CD4-positive, alpha-beta T cell (primary cell): ENCODE measurements at regions of chr10 and their contacts with region 1.

Region 1: DNA sequence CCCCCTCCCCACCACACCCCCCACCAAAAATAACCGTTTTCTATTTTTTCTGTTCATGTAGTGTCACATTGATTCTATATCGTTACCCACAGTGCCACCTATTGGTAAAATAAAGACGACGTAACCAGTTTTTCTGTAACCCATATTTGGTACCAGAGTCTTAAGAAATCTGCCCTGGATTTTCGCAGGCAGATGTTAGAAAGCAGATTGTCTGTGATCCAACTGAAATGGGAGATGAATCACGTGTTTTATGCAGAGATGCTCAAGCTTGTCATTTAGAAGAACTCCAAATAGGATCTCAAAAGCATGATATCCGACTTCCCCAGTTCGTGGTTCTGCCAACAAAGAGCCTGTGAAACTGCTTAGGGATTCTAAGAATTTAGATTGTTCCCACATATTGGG is 261.1 kb upstream of the CSTF2T start:
- DNase-seq: peak in 3 of 14 experiments; percentile 27 to 39 (median 38)
- ATAC-seq: no peak
- H3K4me3 ChIP-seq: no peak overlapping the region
- H3K4me3 Mint-ChIP-seq: no peak overlapping the region
- H3K27ac ChIP-seq: no peak overlapping the region
- H3K27ac Mint-ChIP-seq: no peak overlapping the region
- H3K4me1 ChIP-seq: no peaks in the 10 kb centered on the region
- H3K4me1 Mint-ChIP-seq: no peaks in the 10 kb centered on the region
- H3K27me3 ChIP-seq: no peaks in the 10 kb centered on the region
- H3K27me3 Mint-ChIP-seq: peaks cover 24% of the 10 kb centered on the region
- CTCF ChIP-seq: peak; percentile 69

Region 2: DNA sequence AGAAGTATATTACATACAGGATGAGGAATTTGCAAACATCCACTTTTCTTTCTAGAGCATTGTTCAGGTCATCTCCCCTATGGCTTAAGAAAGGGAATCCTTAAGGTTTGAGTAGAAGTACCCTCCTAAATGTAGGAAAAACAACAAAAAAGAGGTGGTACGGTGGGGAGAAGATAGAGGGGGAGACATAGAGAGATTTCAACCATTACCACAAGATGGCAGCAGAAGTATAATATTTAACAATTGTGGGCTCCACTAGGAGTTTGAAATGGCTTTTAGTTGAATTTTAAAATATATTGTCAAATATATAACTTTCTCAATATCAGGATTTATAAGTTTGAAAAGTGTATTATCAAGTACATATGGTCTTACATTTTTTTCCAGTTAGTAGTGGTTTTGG is 958.9 kb before region 1 on chr10:
- CTCF ChIA-PET with region 1: no interaction called
- POLR2A ChIA-PET with region 1: no interaction called
- intact Hi-C with region 1: loop called in 1 of 2 experiments (anchors 2 kb)
- DNase-seq: peak in 3 of 14 experiments; percentile 1 to 20 (median 11)
- ATAC-seq: no peak
- H3K4me3 ChIP-seq: no peak overlapping the region
- H3K4me3 Mint-ChIP-seq: no peak overlapping the region
- H3K27ac ChIP-seq: no peak overlapping the region
- H3K27ac Mint-ChIP-seq: no peak overlapping the region
- H3K4me1 ChIP-seq: no peaks in the 10 kb centered on the region
- H3K4me1 Mint-ChIP-seq: no peaks in the 10 kb centered on the region
- H3K27me3 ChIP-seq: peaks cover 0 to 6% of the 10 kb centered on the region in 2 experiments
- H3K27me3 Mint-ChIP-seq: peaks cover 20% of the 10 kb centered on the region
- CTCF ChIP-seq: peak; percentile 73

Region 3: DNA sequence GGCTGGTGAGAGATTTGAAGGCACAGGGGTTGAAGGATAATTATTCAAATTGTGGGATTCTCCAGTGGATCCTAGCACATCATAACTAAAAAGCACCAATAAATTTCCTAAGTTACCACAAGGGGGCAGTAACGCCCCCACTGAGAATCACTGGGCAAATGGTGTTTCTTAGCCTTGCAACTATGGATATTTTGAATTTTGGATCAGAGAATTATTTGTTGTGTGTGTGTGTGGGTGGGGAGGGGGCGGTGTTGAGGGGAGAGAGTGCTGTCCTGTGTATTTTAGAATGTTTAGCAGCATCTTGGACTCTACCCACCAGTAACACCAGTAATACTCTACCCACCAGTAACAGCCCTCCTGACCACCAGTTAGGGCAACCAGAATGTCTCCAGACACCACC is 949.5 kb before region 1 on chr10:
- CTCF ChIA-PET with region 1: no interaction called
- POLR2A ChIA-PET with region 1: no interaction called
- intact Hi-C with region 1: loop called (anchors 1 to 2 kb)
- DNase-seq: peak in 3 of 14 experiments; percentile 16 to 49 (median 39)
- ATAC-seq: no peak
- H3K4me3 ChIP-seq: no peak overlapping the region
- H3K4me3 Mint-ChIP-seq: no peak overlapping the region
- H3K27ac ChIP-seq: no peak overlapping the region
- H3K27ac Mint-ChIP-seq: no peak overlapping the region
- H3K4me1 ChIP-seq: no peaks in the 10 kb centered on the region
- H3K4me1 Mint-ChIP-seq: no peaks in the 10 kb centered on the region
- H3K27me3 ChIP-seq: no peaks in the 10 kb centered on the region
- H3K27me3 Mint-ChIP-seq: peaks cover 5% of the 10 kb centered on the region
- CTCF ChIP-seq: peak; percentile 61

Region 4: GRCh38 chr10:51389415-51390321 is 570.8 kb before region 1 on chr10:
- CTCF ChIA-PET with region 1: interaction called, 3 read pairs
- POLR2A ChIA-PET with region 1: no interaction called
- intact Hi-C with region 1: loop called (anchors 2 kb)
- DNase-seq: peak in 12 of 14 experiments; percentile 1 to 45 (median 9)
- ATAC-seq: no peak
- H3K4me3 ChIP-seq: no peak overlapping the region
- H3K4me3 Mint-ChIP-seq: no peak overlapping the region
- H3K27ac ChIP-seq: no peak overlapping the region
- H3K27ac Mint-ChIP-seq: no peak overlapping the region
- H3K4me1 ChIP-seq: no peaks in the 10 kb centered on the region
- H3K4me1 Mint-ChIP-seq: no peaks in the 10 kb centered on the region
- H3K27me3 ChIP-seq: no peaks in the 10 kb centered on the region
- H3K27me3 Mint-ChIP-seq: no peaks in the 10 kb centered on the region
- CTCF ChIP-seq: peak; percentile 43

Region 5: DNA sequence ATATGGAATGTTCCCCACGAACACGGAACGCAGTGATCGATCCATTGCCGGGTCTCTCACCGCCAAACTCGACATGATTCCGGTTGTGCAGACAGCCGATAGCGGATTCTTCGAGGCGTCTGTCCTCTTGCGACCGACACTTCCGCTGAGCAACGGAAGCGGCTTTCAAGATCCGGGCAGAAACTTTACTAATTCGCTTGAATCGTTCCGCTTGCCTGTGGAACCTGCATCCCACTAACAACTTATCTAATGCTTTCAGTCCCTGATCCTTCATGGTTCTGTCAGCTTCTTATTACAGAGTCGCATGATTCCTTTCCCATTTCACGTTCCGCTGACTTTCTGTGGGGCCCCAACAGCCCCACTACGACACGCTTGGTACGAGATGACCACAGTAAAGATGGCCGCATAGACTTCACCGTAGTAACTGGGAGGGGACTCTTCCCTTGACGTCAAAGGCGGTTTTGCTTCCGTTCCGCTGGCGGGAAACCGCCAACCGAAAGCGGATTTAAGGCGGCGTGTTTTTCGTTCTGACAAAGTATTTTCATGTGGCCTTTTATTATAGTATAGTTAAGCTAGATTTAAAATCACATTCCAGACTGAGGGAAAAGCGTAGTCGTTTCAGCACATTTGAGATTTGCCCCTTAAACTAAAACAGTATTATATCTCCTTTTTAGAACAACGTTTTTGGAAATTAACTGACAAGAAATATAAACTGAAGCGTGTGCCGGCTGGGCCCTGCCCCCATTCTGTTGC is 260.8 kb before region 1 on chr10 and contains the start of gene CSTF2T:
- CTCF ChIA-PET with region 1: no interaction called
- POLR2A ChIA-PET with region 1: no interaction called
- intact Hi-C with region 1: no loop called
- DNase-seq: peak; percentile 82 to 96 (median 89)
- ATAC-seq: peak; percentile 88
- H3K4me3 ChIP-seq: peak within 1 kb of the TSS; percentile 93
- H3K4me3 Mint-ChIP-seq: peak within 1 kb of the TSS; percentile 98
- H3K27ac ChIP-seq: peak within 1 kb of the TSS; percentile 95 to 98
- H3K27ac Mint-ChIP-seq: peak within 1 kb of the TSS; percentile 99
- H3K4me1 ChIP-seq: peaks cover 25% of the 10 kb centered on the region
- H3K4me1 Mint-ChIP-seq: peaks cover 51% of the 10 kb centered on the region
- H3K27me3 ChIP-seq: no peaks in the 10 kb centered on the region
- H3K27me3 Mint-ChIP-seq: no peaks in the 10 kb centered on the region
- CTCF ChIP-seq: no peak
- total RNA-seq, gene CSTF2T: 28.4 to 29.6 TPM

Region 6: DNA sequence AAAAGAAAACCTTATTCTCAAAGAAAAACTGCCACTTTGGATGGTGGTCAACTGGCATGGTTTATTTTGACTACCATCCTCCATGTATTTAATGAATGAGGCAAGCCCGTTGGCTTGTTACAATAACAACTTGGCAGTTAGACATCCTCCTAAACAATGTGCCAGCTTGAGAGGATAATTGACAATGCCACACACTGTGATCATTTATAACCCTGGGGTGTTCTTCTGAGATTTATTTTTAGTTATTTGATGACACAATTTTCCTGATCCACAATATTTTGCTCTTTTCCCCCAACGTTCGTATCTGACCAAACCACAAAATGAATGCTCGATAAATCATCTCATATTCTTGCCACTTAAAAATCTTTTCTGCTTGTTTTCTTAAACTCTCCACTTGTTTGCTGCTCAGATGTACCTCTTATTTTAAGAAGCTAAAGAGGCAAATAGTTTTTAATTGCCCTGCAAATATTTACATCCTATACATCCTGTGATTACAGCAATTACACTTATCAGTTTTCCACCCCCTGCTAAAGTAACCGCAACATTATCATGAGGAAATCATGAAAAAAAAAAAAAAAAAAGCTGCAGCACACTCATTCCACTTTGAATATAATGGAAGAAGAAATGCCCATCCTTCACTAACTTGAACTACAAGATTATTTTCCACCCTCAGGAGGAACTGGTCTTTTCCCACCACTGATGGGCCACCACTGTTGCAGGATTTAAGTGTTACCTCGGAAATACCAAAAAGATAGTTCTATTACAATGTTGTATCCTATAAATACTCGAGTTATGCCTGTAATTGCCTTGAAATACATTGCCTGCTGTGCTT is 692.2 kb after region 1 on chr10:
- CTCF ChIA-PET with region 1: no interaction called
- POLR2A ChIA-PET with region 1: no interaction called
- intact Hi-C with region 1: no loop called
- DNase-seq: no peak
- ATAC-seq: no peak
- H3K4me3 ChIP-seq: no peak overlapping the region
- H3K4me3 Mint-ChIP-seq: no peak overlapping the region
- H3K27ac ChIP-seq: no peak overlapping the region
- H3K27ac Mint-ChIP-seq: no peak overlapping the region
- H3K4me1 ChIP-seq: no peaks in the 10 kb centered on the region
- H3K4me1 Mint-ChIP-seq: no peaks in the 10 kb centered on the region
- H3K27me3 ChIP-seq: no peaks in the 10 kb centered on the region
- H3K27me3 Mint-ChIP-seq: no peaks in the 10 kb centered on the region
- CTCF ChIP-seq: no peak